GM12878 (cell line): ENCODE measurements at regions of chr1 and their contacts with region 1.

Region 1: GRCh38 chr1:12229835-12230548 is at the start of gene VPS13D:
- DNase-seq: peak; percentile 5
- ATAC-seq: peak; percentile 97
- H3K4me3 ChIP-seq: peak within 1 kb of the TSS; percentile 88
- H3K27ac ChIP-seq: 0 out of 2 replicates have a peak within 1 kb of the TSS, but pooled peaks have one; percentile 14
- H3K4me1 ChIP-seq: no peaks in the 10 kb centered on the region
- H3K27me3 ChIP-seq: no peaks in the 10 kb centered on the region
- CTCF ChIP-seq: peak; percentile 89 to 98 (median 98)
- EP300 ChIP-seq: no peak
- POLR2A ChIP-seq: peak; percentile 75
- RAD21 ChIP-seq: peak; percentile 39; the same call in 1 of the 2 replicates
- polyA plus RNA-seq, gene VPS13D: 1.4 to 1.7 TPM

Region 2: GRCh38 chr1:12244078-12244477 is 14.1 kb after region 1 on chr1:
- CTCF ChIA-PET with region 1: interaction called, 17 read pairs
- POLR2A ChIA-PET with region 1: interaction called, 3 read pairs
- RAD21 ChIA-PET with region 1: no interaction called
- SMC1A ChIA-PET with region 1: interaction called, 7 read pairs
- in situ Hi-C with region 1: no loop called
- intact Hi-C with region 1: no loop called
- DNase-seq: no peak
- ATAC-seq: no peak
- H3K4me3 ChIP-seq: no peak overlapping the region
- H3K27ac ChIP-seq: no peak overlapping the region
- H3K4me1 ChIP-seq: no peaks in the 10 kb centered on the region
- H3K27me3 ChIP-seq: no peaks in the 10 kb centered on the region
- CTCF ChIP-seq: peak; percentile 25 to 41 (median 35); a peak in 5 of 6 replicates
- EP300 ChIP-seq: no peak
- POLR2A ChIP-seq: no peak
- RAD21 ChIP-seq: peak; percentile 31; the same call in 1 of the 2 replicates

Region 3: DNA sequence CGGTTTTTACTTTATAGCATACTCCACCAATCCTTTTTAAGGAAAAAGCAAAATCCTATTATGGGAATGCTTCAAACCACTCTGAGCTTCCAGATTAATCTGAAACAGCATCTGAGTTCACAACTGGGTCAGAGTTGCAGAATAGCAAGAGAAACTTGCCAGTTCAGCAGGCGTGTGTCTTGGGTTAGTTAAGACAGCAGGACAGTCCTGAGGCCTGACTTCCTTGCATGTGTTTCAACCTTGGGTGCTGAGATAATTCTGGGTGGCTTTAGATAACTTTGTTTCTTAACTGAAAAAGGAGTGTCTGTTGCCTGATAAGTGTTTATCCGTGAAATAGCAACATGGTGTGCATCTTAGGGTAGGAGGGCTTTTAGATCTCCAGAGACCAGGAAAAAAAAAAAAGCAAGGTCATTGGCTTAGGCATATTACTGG is 218.8 kb after region 1 on chr1:
- CTCF ChIA-PET with region 1: no interaction called
- POLR2A ChIA-PET with region 1: no interaction called
- RAD21 ChIA-PET with region 1: no interaction called
- SMC1A ChIA-PET with region 1: no interaction called
- in situ Hi-C with region 1: no loop called
- intact Hi-C with region 1: no loop called
- DNase-seq: no peak
- ATAC-seq: peak; percentile 46
- H3K4me3 ChIP-seq: no peak overlapping the region
- H3K27ac ChIP-seq: no peak overlapping the region
- H3K4me1 ChIP-seq: peaks cover 23% of the 10 kb centered on the region
- H3K27me3 ChIP-seq: no peaks in the 10 kb centered on the region
- CTCF ChIP-seq: no peak
- EP300 ChIP-seq: no peak
- POLR2A ChIP-seq: no peak
- RAD21 ChIP-seq: no peak

Region 4: GRCh38 chr1:12486401-12487005 is 256.5 kb after region 1 on chr1:
- CTCF ChIA-PET with region 1: no interaction called
- POLR2A ChIA-PET with region 1: no interaction called
- RAD21 ChIA-PET with region 1: no interaction called
- SMC1A ChIA-PET with region 1: no interaction called
- in situ Hi-C with region 1: no loop called
- intact Hi-C with region 1: no loop called
- DNase-seq: no peak
- ATAC-seq: no peak
- H3K4me3 ChIP-seq: no peak overlapping the region
- H3K27ac ChIP-seq: no peak overlapping the region
- H3K4me1 ChIP-seq: peaks cover 5% of the 10 kb centered on the region
- H3K27me3 ChIP-seq: no peaks in the 10 kb centered on the region
- CTCF ChIP-seq: no peak
- EP300 ChIP-seq: no peak
- POLR2A ChIP-seq: no peak
- RAD21 ChIP-seq: no peak